ENCODE measurements at regions of chr20 and their contacts with region 1.

Region 1: DNA sequence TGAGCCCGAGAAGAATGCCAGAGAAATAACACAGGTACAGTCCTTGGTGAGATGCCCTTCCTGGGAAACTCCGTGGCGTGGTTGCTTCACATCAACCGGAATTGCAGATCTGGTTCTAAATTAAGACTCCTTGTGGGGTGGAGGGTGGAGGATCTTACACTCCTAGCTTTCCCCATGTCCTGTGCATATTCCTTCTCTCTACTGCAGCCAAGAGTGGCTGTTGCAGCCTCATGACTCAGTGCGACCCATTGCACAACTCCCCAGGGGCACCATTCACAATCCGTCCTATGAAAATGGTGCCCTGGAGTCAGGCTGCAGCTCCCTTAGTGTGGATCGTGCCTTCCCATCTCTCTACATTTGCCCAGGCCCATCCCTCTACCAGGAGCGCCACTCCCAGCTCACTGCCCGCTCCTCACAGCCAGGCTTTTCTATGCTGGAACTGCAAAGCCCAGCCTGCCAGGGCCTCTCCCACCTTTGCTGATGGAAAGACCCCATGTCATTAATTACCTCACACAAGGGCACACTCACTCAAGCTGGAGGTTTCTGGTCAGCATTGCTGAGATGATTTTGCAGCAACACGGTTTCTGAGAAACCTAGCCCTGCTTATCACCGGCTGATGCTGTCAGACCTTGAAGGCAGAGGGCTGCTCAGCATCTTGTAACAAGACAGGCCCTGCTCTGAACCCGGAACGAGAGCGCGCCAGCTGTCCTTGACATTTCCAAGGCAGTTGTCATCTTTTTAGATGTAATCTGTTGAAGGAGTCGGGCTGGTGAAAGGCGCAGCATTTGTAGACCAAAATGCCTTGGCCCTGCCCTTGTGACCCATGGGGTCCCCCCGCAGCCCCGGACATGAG is 39.7 kb downstream of the SIRPA start:
- DNase-seq: peak in 1 of 3 donors; percentile 36
- ATAC-seq: peak in 1 of 4 donors; percentile 8
- H3K4me3 ChIP-seq: no peak overlapping the region
- H3K27ac ChIP-seq: peak overlapping the region; percentile 29 to 41 (median 36)
- H3K4me1 ChIP-seq: peaks cover 0 to 50% (median 27%) of the 10 kb centered on the region in 4 donors
- H3K27me3 ChIP-seq: no peaks in the 10 kb centered on the region
- CTCF ChIP-seq: no peak
- POLR2A ChIP-seq: no peak

Region 2: GRCh38 chr20:1888796-1889463 is 46.0 kb before region 1 on chr20:
- intact Hi-C with region 1: loop called (anchors 10 kb)
- DNase-seq: peak; percentile 62 to 73 (median 72)
- ATAC-seq: peak; percentile 45 to 75 (median 70)
- H3K4me3 ChIP-seq: no peak overlapping the region
- H3K27ac ChIP-seq: peak overlapping the region in 1 of 3 donors; percentile 43
- H3K4me1 ChIP-seq: peaks cover 0 to 30% (median 8%) of the 10 kb centered on the region in 4 donors
- H3K27me3 ChIP-seq: no peaks in the 10 kb centered on the region
- CTCF ChIP-seq: no peak
- POLR2A ChIP-seq: peak; percentile 35

Region 3: GRCh38 chr20:2005831-2006426 is 71.0 kb after region 1 on chr20:
- intact Hi-C with region 1: no loop called
- DNase-seq: peak; percentile 77 to 81 (median 80)
- ATAC-seq: peak; percentile 68 to 91 (median 84)
- H3K4me3 ChIP-seq: no peak overlapping the region
- H3K27ac ChIP-seq: no peak overlapping the region
- H3K4me1 ChIP-seq: no peaks in the 10 kb centered on the region
- H3K27me3 ChIP-seq: no peaks in the 10 kb centered on the region
- CTCF ChIP-seq: no peak
- POLR2A ChIP-seq: no peak

Measured in right lobe of liver (tissue), 6 donors.